Right ventricle myocardium inferior (tissue), 1 donor: ENCODE measurements at regions of chr10 and their contacts with region 1.

Region 1: DNA sequence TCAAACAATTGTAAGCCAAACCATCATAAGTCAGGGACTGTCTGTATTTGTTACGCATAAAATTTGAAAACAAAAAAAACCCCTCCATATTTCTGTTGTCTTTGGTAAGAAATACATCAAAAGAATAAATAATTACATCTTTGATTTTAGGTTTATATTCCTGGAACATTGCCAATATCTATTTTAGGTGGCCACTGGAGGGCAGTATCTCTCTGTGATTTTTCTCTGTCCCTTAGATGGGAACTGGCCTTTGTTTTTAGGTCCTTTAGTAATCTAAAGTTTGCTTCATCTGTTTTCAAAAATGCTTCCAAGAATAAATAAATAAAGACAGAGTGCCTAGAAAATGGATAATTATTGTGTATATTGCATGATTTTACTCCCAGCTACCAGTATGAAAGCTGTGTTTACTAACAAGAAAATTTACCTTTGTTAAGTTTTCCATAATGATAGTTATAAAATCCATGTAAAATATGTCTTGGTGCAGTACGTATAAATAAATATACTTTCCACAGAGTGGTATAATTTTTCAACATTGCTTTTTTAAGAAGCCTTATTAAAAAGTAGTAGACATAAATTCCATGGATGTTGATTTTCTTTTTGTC is 64.2 kb downstream of the PHYHIPL start:
- DNase-seq: no peak
- ATAC-seq: no peak

Region 2: GRCh38 chr10:59167512-59167911 is 73.2 kb before region 1 on chr10:
- intact Hi-C with region 1: no loop called
- DNase-seq: no peak
- ATAC-seq: no peak

Region 3: DNA sequence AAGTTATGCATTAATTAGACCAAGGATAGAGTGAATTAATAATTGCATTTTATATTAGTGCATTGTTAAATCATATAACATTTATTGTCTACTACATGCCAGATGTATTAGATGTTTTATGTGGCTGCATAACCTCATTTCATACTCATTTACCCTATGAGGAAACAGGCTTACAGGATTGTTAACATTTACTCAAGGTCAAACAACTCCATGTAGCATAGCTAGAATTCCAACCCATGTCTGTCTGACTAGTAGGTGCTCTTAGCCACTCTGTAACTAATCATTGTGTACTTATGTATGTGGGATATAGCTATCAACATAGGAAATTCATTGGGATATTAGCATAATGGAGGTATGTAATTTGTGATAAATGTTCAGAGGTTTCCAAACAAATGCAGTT is 17.9 kb before region 1 on chr10:
- intact Hi-C with region 1: no loop called
- DNase-seq: no peak
- ATAC-seq: no peak

Region 4: GRCh38 chr10:59465088-59465487 is 224.4 kb after region 1 on chr10:
- intact Hi-C with region 1: loop called (anchors 1 kb)
- DNase-seq: no peak
- ATAC-seq: no peak

Region 5: DNA sequence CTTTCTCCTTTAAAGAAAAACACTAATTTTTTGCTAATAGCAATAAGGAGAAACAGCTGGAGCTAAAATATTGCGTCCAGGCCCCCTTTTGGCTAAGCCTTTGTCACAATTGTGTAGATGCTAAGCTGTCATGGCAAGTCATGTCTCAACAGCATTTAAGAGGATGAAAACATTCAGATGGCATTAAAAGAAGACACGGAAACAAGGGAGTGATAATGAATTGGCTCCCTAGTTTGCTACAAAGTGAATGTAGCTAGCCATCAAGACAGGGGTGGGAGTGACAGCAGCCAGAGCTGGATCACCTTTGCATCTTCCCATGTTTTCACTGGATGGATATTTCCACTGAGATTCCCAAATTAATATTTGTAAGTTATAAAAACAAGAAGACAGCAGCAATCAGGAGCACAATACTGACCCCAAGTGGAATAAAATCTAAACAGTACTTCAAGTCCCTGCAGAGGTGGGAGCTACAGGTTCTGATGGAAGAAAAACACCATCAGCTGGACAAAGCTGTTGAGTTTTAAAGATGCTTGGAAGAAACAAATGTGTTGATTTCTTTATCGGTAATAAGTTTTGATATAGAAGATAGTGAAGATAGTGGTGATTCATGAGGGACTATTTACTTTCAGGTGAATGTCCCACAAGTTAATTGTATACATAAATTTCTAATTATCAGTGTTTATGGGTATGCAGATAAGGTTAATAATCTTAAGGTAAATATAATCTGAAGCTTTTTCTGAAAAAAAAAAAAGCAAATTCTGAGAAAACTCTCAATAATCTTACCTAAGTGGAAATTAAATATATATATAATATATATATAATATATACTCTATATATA is 339.6 kb after region 1 on chr10:
- intact Hi-C with region 1: loop called (anchors 1 kb)
- DNase-seq: no peak
- ATAC-seq: peak; percentile 32